ENCODE measurements at regions of chr3 and their contacts with region 1.

Region 1: DNA sequence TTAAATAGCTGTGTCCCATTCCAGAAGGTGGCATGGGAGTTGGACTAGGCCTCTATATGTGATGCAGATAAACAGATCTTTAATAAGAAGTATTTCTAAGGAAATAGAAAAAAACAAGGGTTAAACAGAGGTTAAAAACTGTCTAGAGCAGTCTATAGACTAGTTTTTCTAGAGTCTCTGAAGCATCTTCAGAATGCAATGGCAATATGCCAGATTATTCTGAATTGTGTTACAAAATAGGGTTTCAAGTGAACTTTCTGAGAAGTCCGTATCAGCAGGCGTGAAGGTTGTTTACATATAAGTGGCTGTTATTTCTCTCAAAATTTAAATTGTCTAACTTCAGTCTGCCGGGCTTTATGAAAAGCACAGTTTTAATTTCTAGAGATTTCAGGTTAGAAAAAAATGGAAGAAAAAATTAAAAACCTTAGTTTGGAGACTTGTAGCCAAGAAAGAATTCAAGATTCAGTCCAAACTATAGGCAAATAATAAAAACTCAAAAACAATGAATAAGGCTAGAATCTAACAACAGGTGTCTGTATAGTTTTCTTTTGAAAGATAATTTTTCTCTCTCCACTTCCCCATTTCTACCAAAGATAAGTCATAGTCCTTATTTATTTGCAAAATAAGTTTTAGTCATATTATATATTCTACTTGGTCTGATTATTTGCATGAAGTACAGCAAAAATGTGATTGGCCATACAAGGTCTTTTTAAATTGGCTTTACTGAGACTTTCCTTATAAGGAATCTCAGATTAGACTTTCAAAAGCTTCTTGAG is 55.2 kb downstream of the OSTN start:
- DNase-seq: no peak
- ATAC-seq: no peak
- H3K4me3 ChIP-seq: peak overlapping the region in 1 of 5 experiments; percentile 8
- H3K4me3 Mint-ChIP-seq: no peak overlapping the region
- H3K27ac ChIP-seq: peak overlapping the region; percentile 31 to 89
- H3K27ac Mint-ChIP-seq: peak overlapping the region; percentile 90
- H3K4me1 ChIP-seq: peaks cover 50 to 64% of the 10 kb centered on the region in 2 donors
- H3K4me1 Mint-ChIP-seq: peaks cover 65% of the 10 kb centered on the region
- H3K27me3 ChIP-seq: no peaks in the 10 kb centered on the region
- H3K27me3 Mint-ChIP-seq: no peaks in the 10 kb centered on the region
- CTCF ChIP-seq: no peak

Region 2: DNA sequence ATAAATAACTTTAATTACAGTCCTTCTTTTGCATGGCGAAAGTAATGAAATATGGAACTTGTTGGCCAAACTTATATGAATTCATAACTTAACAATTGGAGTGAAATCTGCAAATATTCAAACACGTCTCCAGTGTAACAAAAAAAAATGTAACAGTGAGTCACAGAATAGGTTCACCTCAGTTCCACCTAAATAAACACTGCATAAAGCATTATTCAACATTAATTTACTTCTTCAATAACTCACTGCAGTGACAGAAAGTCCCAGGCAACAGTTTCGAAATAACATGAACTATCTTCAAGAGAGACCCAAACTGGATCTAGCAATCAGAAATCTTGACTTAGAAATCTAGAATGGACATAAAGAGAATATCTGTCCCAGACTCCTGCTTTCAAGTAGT is 467.4 kb before region 1 on chr3:
- CTCF ChIA-PET with region 1: no interaction called
- POLR2A ChIA-PET with region 1: no interaction called
- intact Hi-C with region 1: no loop called
- DNase-seq: no peak
- ATAC-seq: no peak
- H3K4me3 ChIP-seq: no peak overlapping the region
- H3K4me3 Mint-ChIP-seq: no peak overlapping the region
- H3K27ac ChIP-seq: no peak overlapping the region
- H3K27ac Mint-ChIP-seq: no peak overlapping the region
- H3K4me1 ChIP-seq: no peaks in the 10 kb centered on the region
- H3K4me1 Mint-ChIP-seq: no peaks in the 10 kb centered on the region
- H3K27me3 ChIP-seq: no peaks in the 10 kb centered on the region
- H3K27me3 Mint-ChIP-seq: no peaks in the 10 kb centered on the region
- CTCF ChIP-seq: no peak

Region 3: GRCh38 chr3:191105418-191105817 is 148.9 kb before region 1 on chr3:
- CTCF ChIA-PET with region 1: no interaction called
- POLR2A ChIA-PET with region 1: no interaction called
- intact Hi-C with region 1: no loop called
- DNase-seq: peak; percentile 29
- ATAC-seq: no peak
- H3K4me3 ChIP-seq: no peak overlapping the region
- H3K4me3 Mint-ChIP-seq: no peak overlapping the region
- H3K27ac ChIP-seq: no peak overlapping the region
- H3K27ac Mint-ChIP-seq: no peak overlapping the region
- H3K4me1 ChIP-seq: peaks cover 0 to 7% of the 10 kb centered on the region in 2 donors
- H3K4me1 Mint-ChIP-seq: peaks cover 14% of the 10 kb centered on the region
- H3K27me3 ChIP-seq: peaks cover 0 to 6% (median 4%) of the 10 kb centered on the region in 4 experiments
- H3K27me3 Mint-ChIP-seq: peaks cover 27% of the 10 kb centered on the region
- CTCF ChIP-seq: no peak

Region 4: DNA sequence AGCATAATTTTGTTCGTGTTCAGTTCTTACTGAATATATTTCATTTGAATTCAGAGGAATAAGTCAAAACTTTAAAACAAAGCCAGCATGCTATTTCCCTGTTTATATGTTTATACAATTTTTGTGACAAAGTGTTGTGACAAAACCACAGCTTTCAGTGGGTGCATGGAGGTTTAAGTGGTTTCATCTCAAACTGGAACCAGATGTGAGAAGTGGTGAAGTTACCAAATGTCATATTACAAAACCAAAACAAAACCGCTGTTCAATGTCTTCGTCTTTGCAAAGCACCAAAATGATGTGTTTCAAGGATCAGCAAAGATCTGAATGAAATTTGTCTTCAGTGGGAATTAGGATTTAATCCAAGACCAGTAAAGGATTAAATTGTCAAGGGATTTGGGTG is 114.5 kb before region 1 on chr3:
- CTCF ChIA-PET with region 1: no interaction called
- POLR2A ChIA-PET with region 1: no interaction called
- intact Hi-C with region 1: no loop called
- DNase-seq: no peak
- ATAC-seq: no peak
- H3K4me3 ChIP-seq: no peak overlapping the region
- H3K4me3 Mint-ChIP-seq: peak overlapping the region; percentile 53
- H3K27ac ChIP-seq: no peak overlapping the region
- H3K27ac Mint-ChIP-seq: no peak overlapping the region
- H3K4me1 ChIP-seq: peaks cover 28 to 41% of the 10 kb centered on the region in 2 donors
- H3K4me1 Mint-ChIP-seq: peaks cover 55% of the 10 kb centered on the region
- H3K27me3 ChIP-seq: no peaks in the 10 kb centered on the region
- H3K27me3 Mint-ChIP-seq: no peaks in the 10 kb centered on the region
- CTCF ChIP-seq: no peak

Region 5: DNA sequence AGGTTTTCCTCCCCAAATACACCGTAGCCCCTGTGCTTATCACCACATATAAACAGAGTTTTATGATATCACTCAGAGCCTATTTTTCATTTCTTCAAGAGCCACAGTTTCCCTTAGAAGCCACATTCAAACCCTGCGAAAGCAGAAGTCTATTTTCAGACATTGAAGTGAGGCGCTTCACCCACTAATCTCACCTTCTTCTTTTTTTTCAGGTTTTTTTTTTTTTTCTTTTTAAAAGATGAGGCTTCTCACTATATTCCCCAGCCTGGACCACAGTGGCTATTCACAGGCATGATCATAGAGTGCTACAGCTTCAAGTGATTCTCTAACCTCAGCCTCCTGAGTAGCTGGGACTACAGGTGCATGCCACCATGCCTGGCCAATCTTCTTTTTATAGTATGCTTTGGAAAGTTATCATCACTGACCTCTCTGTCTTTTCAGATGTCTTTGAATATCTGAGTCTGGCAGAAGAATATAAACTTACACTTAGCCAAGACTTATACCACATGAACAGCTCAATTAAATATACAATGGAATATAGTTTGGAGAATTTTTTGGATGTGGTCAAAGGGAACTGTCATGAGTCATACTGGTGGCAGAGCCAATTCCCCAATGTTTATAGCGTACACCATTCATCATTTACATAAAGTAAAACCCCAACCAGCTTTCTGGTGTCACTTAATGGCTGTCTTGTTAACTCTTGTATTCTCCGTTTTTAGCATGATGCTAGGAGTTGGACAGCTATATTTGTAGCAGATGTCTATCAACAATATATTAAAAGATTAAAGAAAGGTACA is 15.2 kb after region 1 on chr3:
- CTCF ChIA-PET with region 1: interaction called, 4 read pairs
- POLR2A ChIA-PET with region 1: no interaction called
- intact Hi-C with region 1: loop called (anchors 2 kb)
- DNase-seq: peak; percentile 64
- ATAC-seq: peak; percentile 72
- H3K4me3 ChIP-seq: peak overlapping the region in 2 of 5 experiments; percentile 29 to 40
- H3K4me3 Mint-ChIP-seq: peak overlapping the region; percentile 64
- H3K27ac ChIP-seq: peak overlapping the region; percentile 53 to 79
- H3K27ac Mint-ChIP-seq: peak overlapping the region; percentile 85
- H3K4me1 ChIP-seq: peaks cover 31 to 36% of the 10 kb centered on the region in 2 donors
- H3K4me1 Mint-ChIP-seq: peaks cover 48% of the 10 kb centered on the region
- H3K27me3 ChIP-seq: no peaks in the 10 kb centered on the region
- H3K27me3 Mint-ChIP-seq: no peaks in the 10 kb centered on the region
- CTCF ChIP-seq: no peak

Region 6: GRCh38 chr3:191919491-191920026 is 665.3 kb after region 1 on chr3:
- CTCF ChIA-PET with region 1: no interaction called
- POLR2A ChIA-PET with region 1: no interaction called
- intact Hi-C with region 1: no loop called
- DNase-seq: no peak
- ATAC-seq: no peak
- H3K4me3 ChIP-seq: no peak overlapping the region
- H3K4me3 Mint-ChIP-seq: no peak overlapping the region
- H3K27ac ChIP-seq: no peak overlapping the region
- H3K27ac Mint-ChIP-seq: no peak overlapping the region
- H3K4me1 ChIP-seq: no peaks in the 10 kb centered on the region
- H3K4me1 Mint-ChIP-seq: no peaks in the 10 kb centered on the region
- H3K27me3 ChIP-seq: no peaks in the 10 kb centered on the region
- H3K27me3 Mint-ChIP-seq: no peaks in the 10 kb centered on the region
- CTCF ChIP-seq: no peak

Measured in B cell (primary cell).